ENCODE measurements at regions of chr1 and their contacts with region 1.

Region 1: DNA sequence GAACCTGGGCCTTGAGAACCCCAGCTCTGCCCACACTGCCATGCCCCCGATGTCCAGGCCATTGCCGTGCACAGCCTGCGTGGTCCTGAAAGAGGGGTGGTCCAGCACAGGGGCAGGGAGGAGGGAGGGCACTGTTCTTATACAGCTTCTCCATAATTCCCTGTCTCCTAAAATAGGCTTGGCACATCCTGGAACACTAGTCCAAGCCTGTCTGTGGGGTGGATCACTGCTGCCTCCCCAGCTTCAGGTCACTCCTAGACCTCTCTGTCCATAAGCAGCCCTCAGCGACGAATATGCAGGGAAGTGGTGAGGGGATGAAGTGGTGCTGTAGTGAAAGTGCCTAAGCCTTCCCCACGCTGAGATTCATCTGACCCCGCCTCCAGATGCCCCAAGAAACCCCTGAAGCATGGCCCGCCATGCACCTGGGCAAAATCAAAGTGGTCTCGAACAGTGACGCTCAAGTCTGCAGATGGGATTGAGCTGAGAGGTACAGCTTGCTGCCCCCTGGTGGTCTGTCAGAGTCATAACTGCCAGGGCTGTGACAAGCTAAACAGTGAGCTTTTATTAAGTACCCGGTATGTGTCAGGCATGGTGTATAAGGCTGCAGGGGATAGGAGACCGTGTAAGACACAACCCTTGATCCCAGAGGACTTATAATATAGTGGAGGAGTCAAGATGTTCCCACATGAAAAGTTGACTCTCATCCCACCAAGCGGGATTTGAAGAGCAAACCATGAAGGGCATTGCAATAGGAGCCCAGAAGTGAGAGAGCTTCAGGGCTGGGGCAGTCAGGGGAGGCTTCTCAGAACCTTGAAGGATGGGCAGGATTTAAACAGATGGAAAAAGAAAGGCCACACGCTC is 66.6 kb downstream of the FAM163A start:
- DNase-seq: peak; percentile 81
- H3K4me3 ChIP-seq: no peak overlapping the region
- H3K27ac ChIP-seq: no peak overlapping the region
- H3K4me1 ChIP-seq: peaks cover 4% of the 10 kb centered on the region
- CTCF ChIP-seq: peak; percentile 94

Region 2: GRCh38 chr1:177898003-177898654 is 1911.6 kb before region 1 on chr1:
- CTCF ChIA-PET with region 1: interaction called, 14 read pairs
- POLR2A ChIA-PET with region 1: no interaction called
- intact Hi-C with region 1: no loop called
- DNase-seq: no peak
- H3K4me3 ChIP-seq: no peak overlapping the region
- H3K27ac ChIP-seq: no peak overlapping the region
- H3K4me1 ChIP-seq: no peaks in the 10 kb centered on the region
- CTCF ChIP-seq: no peak

Region 3: GRCh38 chr1:179706339-179706941 is 103.3 kb before region 1 on chr1:
- CTCF ChIA-PET with region 1: interaction called, 21 read pairs
- POLR2A ChIA-PET with region 1: interaction called, 4 read pairs
- intact Hi-C with region 1: loop called (anchors 1 kb)
- DNase-seq: peak; percentile 70
- H3K4me3 ChIP-seq: no peak overlapping the region
- H3K27ac ChIP-seq: no peak overlapping the region
- H3K4me1 ChIP-seq: no peaks in the 10 kb centered on the region
- CTCF ChIP-seq: peak; percentile 98

Region 4: GRCh38 chr1:179926494-179927205 is 116.9 kb after region 1 on chr1:
- CTCF ChIA-PET with region 1: no interaction called
- POLR2A ChIA-PET with region 1: no interaction called
- intact Hi-C with region 1: no loop called
- DNase-seq: no peak
- H3K4me3 ChIP-seq: no peak overlapping the region
- H3K27ac ChIP-seq: no peak overlapping the region
- H3K4me1 ChIP-seq: no peaks in the 10 kb centered on the region
- CTCF ChIP-seq: no peak

Measured in OCI-LY7 (cell line).